CD8-positive, alpha-beta memory T cell (primary cell): ENCODE measurements at regions of chr12 and their contacts with region 1.

Region 1: DNA sequence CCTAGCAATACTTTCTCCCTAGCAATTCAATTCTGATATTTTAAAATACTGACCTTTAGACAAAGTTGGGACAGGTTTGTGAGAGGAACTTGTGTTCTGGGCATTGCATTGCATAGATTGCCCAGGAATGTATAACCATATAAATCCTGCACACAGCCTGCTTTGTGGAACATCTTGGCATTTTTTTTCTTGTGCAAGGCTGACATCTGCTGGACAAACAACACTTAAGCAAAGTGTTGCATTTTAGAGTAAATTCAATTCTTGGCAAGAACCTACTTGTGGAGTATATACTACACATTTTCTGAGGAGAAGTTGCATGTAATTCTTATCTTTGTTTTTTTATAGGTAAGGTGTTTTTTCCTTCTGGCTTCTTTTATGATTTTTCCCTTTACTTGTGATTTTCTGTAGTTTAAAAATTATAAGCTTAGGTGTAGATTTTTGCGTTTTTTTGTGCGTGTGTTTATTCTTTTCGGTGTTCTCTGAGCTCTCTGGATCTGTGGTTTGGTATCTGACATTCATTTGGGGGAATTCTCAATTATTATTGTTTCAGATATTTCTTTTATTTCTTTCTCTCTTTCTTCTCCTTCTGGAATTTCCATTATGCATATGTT is 26.4 kb downstream of the TESPA1 start:
- DNase-seq: peak in 4 of 5 donors; percentile 35 to 65 (median 50)
- H3K4me3 ChIP-seq: no peak overlapping the region
- H3K4me3 Mint-ChIP-seq: peak overlapping the region in 3 of 7 donors; percentile 11 to 36 (median 35)
- H3K27ac ChIP-seq: no peak overlapping the region
- H3K27ac Mint-ChIP-seq: peak overlapping the region in 4 of 8 donors; percentile 12 to 76 (median 57)
- H3K4me1 ChIP-seq: peaks cover 78% of the 10 kb centered on the region
- H3K4me1 Mint-ChIP-seq: peaks cover 61 to 93% (median 79%) of the 10 kb centered on the region in 3 donors
- H3K27me3 ChIP-seq: no peaks in the 10 kb centered on the region
- H3K27me3 Mint-ChIP-seq: no peaks in the 10 kb centered on the region

Region 2: DNA sequence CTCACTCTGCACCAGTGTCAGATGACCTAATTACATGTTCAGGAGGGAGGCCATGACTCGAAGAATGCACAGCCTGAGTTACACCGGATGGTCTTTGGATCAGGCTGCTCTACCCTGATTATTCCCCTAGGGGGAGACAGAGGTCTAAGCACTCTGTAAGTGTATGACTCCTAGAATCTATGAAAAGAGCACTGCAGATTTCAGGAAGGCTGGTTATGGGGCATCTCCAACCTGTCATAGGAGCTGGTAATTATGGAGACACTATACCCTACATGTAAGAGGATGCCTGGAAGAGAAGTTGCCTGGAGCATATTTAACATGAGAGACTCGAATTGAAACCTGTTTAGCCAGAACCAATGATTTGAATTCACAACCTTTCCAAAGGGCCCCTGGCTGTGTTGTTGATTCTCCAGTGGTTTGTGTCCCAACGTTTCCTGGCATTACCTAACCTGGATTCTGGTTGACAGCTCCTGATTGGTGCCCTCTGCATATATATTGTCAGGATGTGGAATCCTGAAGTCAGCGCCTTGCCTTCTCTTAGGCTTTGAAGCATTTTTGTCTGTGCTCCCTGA is 104.1 kb before region 1 on chr12 and contains the start of gene MUCL1:
- CTCF ChIA-PET with region 1: interaction called, 20 read pairs
- POLR2A ChIA-PET with region 1: no interaction called
- DNase-seq: peak; percentile 41 to 72 (median 55)
- H3K4me3 ChIP-seq: no peak within 1 kb of the TSS
- H3K4me3 Mint-ChIP-seq: no peak within 1 kb of the TSS
- H3K27ac ChIP-seq: no peak within 1 kb of the TSS
- H3K27ac Mint-ChIP-seq: peak within 1 kb of the TSS in 3 of 8 donors; percentile 9 to 25 (median 13)
- H3K4me1 ChIP-seq: no peaks in the 10 kb centered on the region
- H3K4me1 Mint-ChIP-seq: peaks cover 0 to 4% (median 2%) of the 10 kb centered on the region in 3 donors
- H3K27me3 ChIP-seq: no peaks in the 10 kb centered on the region
- H3K27me3 Mint-ChIP-seq: peaks cover 0 to 13% of the 10 kb centered on the region in 2 donors
- total RNA-seq, gene MUCL1: not detected